ENCODE measurements at regions of chr10 and their contacts with region 1.

Region 1: DNA sequence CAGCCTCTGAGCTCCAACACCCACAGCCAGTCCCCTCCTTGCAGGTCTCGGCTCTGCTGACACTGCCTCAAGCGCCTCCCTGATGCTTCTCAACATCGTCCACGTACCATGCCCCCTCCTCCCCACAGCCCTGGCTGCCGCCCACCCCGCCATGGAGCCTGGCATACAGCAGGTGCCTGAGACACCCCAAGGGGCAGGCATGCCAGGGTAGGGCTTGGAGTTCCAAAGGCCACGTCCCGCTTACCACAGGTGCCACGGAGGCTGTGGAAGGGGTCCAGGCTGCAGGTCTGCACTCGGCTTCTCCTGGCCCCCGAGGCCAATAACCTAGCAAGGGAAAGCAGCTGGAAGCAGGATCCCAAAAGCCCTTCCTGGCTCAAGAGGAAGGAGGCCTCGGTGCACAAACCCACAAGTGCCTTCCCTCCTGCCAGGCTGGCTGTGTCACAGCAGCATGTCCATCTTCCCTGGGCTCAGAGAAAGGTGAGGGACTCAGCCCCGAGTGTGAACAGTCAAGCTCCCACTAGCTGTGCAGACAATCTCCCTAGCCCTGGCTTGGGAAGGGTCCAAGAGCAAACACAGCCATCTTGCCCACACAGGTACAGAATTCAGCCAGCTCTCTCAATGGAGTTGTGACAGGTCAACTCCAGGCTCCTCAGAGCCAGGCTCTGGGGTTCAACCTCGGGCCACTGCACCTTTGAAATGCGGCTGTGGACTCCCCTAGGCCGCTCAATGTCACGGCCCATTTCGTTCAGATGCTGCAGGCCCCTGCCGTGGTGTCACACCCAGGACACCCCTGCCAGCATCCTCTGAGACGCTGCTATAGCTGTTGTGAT is 138.1 kb downstream of the DIP2C start:
- DNase-seq: peak in 4 of 42 donors; percentile 27 to 41 (median 34)

Region 2: GRCh38 chr10:580778-581177 is 29.4 kb after region 1 on chr10:
- intact Hi-C with region 1: loop called (anchors 1 kb)
- DNase-seq: peak in 2 of 42 donors; percentile 19 to 22

Region 3: DNA sequence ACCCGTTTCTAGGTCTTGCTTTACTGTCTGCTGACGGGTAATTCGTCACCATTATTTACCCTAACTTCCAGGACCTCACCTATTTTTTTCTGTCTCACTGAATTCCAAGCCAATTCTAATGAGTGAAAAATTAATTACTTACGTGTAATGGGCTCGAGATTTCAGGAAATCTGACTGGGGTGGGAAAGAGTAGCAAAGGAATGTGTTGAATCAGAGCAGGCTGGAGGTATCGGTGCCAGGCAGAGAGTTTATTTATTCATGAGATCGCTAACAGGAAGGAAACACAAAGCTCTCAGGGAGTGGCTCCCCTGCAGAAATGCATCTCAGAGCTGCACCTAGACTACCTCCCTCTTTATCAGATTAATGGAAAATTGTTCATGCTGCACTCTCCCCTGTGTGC is 142.2 kb after region 1 on chr10:
- intact Hi-C with region 1: no loop called
- DNase-seq: peak in 1 of 42 donors; percentile 41

Measured in head of caudate nucleus (tissue), 42 donors.